ENCODE measurements at regions of chr7 and their contacts with region 1.

Region 1: GRCh38 chr7:151631968-151632749 is 112.5 kb upstream of the RHEB start:
- DNase-seq: peak; percentile 95
- ATAC-seq: peak; percentile 83
- H3K4me3 Mint-ChIP-seq: peak overlapping the region; percentile 93
- H3K27ac Mint-ChIP-seq: peak overlapping the region; percentile 97
- H3K4me1 Mint-ChIP-seq: peaks cover 17% of the 10 kb centered on the region
- H3K27me3 Mint-ChIP-seq: no peaks in the 10 kb centered on the region

Region 2: DNA sequence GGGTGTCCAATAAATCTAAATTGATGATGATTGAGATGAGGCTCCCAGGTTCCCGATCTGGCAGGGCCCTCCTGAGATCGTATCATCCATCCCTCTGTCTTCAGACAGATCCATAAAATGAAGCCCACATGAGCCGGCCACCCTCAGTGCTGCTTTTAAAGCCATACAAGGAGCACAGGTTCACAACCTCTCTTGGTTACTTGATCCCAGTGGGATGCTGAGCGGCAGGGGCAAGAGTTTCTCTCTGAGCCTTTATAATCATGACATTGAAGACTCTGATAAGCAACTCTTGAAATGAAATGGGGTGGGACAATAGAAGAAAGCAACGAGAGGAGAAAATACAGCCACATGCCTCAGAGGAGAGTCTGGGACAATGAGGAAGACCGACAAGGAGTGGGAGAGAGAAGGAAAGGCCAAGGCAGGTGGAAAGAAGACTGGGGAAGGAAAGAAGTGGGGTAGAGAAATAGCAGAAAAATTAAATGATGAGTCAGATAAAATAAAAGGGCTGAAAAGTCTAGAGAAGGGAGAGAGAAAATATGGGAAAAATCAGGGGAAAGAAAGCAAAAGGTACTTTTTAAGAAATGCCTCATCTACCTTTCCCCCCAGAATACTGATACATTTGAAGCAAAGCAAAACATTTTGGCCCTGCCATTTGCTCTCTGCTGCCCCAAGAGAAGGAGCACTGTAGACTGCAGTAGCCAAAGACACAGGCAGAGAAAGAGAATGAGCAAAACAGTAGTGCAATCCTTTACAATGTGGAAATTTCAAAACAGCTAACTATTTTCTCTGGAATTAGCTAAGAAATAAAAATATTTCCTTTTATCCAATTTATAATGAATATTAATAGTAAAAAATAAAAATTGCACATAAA is 479.3 kb before region 1 on chr7:
- POLR2A ChIA-PET with region 1: no interaction called
- DNase-seq: no peak
- ATAC-seq: no peak
- H3K4me3 Mint-ChIP-seq: no peak overlapping the region
- H3K27ac Mint-ChIP-seq: no peak overlapping the region
- H3K4me1 Mint-ChIP-seq: no peaks in the 10 kb centered on the region
- H3K27me3 Mint-ChIP-seq: peaks cover 43% of the 10 kb centered on the region

Region 3: DNA sequence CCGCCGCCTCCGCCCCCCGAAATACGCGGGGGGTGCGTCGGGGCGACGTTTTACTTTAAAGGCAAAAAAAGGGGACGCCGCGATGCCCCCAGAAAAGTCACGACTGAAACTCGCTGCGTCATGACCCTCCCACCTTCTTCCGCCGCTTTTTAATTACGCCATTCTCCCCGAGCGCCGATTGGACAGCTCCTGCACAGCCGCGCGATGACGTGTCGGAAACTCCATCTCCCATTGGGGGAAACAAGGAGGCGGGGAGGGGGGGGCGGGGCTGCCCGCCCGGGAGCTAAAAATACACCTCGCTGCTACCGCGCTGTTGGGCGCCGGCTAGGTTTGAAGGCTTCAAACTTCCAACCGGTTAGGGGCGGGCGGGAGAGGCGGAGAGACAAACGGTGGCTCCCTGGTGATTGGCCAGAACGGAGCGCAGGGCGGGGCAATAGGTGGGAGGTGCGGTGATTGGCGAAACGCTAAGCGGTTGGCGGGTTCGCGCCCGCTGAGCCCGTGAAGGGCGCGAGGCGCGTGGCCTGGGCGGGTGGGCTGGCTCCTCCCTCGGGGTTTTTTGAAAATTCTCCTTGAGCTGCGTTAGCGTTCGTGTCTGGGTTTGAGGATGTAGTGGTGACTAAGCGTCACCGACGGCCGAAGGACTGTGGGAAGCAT is 112.3 kb before region 1 on chr7 and contains the start of gene RHEB:
- POLR2A ChIA-PET with region 1: interaction called, 31 read pairs
- DNase-seq: peak; percentile 96
- ATAC-seq: peak; percentile 88
- H3K4me3 Mint-ChIP-seq: peak within 1 kb of the TSS; percentile 98
- H3K27ac Mint-ChIP-seq: peak within 1 kb of the TSS; percentile 98
- H3K4me1 Mint-ChIP-seq: peaks cover 34% of the 10 kb centered on the region
- H3K27me3 Mint-ChIP-seq: peaks cover 4% of the 10 kb centered on the region
- total RNA-seq, gene RHEB: 73.0 to 78.9 TPM

Region 4: GRCh38 chr7:151599401-151600227 is 32.5 kb before region 1 on chr7:
- POLR2A ChIA-PET with region 1: no interaction called
- DNase-seq: no peak
- ATAC-seq: no peak
- H3K4me3 Mint-ChIP-seq: no peak overlapping the region
- H3K27ac Mint-ChIP-seq: peak overlapping the region; percentile 5
- H3K4me1 Mint-ChIP-seq: no peaks in the 10 kb centered on the region
- H3K27me3 Mint-ChIP-seq: no peaks in the 10 kb centered on the region

Region 5: GRCh38 chr7:151759591-151760042 is 127.5 kb after region 1 on chr7:
- POLR2A ChIA-PET with region 1: interaction called, 13 read pairs
- DNase-seq: peak; percentile 55
- ATAC-seq: peak; percentile 38
- H3K4me3 Mint-ChIP-seq: no peak overlapping the region
- H3K27ac Mint-ChIP-seq: peak overlapping the region; percentile 60
- H3K4me1 Mint-ChIP-seq: peaks cover 24% of the 10 kb centered on the region
- H3K27me3 Mint-ChIP-seq: no peaks in the 10 kb centered on the region

Measured in activated naive CD8-positive, alpha-beta T cell treated with anti-CD3 and anti-CD28 coated beads, Interleukin-2, amount 10 ng/mL, durations not matched to agents 7 days and 5 days (primary cell).